Endothelial cell of umbilical vein (primary cell): ENCODE measurements at regions of chr1 and their contacts with region 1.

Region 1: GRCh38 chr1:208207388-208208131 is 36.6 kb downstream of the PLXNA2 start:
- DNase-seq: peak; percentile 97
- H3K4me3 ChIP-seq: no peak overlapping the region
- H3K27ac ChIP-seq: peak overlapping the region; percentile 94
- H3K4me1 ChIP-seq: peaks cover 94% of the 10 kb centered on the region
- H3K27me3 ChIP-seq: no peaks in the 10 kb centered on the region
- CTCF ChIP-seq: no peak
- POLR2A ChIP-seq: no peak

Region 2: GRCh38 chr1:207868774-207869721 is 338.5 kb before region 1 on chr1:
- CTCF ChIA-PET with region 1: no interaction called
- POLR2A ChIA-PET with region 1: no interaction called
- dilution Hi-C with region 1: no loop called
- intact Hi-C with region 1: no loop called
- DNase-seq: peak; percentile 83
- H3K4me3 ChIP-seq: peak overlapping the region; percentile 64 to 67 (median 65)
- H3K27ac ChIP-seq: peak overlapping the region; percentile 52
- H3K4me1 ChIP-seq: peaks cover 17% of the 10 kb centered on the region
- H3K27me3 ChIP-seq: no peaks in the 10 kb centered on the region
- CTCF ChIP-seq: peak; percentile 73 to 95
- POLR2A ChIP-seq: peak; percentile 59

Region 3: DNA sequence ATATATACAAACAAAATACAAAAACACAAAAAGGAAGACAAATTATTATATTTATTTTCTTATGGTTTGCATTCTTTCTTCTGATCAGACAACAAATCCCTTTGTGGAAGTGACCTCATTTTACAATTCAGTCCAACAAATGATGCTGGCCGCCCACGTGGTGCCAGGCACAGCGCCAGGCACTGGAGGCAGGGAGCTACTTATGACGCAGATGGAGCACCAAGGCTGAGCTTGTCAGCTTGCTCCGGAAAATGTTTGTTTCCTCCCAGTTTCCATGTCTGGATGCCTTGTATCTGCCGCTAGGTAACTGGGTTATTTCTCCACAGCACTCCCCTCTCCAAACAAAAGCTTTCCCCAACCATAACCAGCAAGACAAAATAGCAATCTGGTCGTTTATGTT is 265.9 kb before region 1 on chr1:
- CTCF ChIA-PET with region 1: interaction called, 3 read pairs
- POLR2A ChIA-PET with region 1: no interaction called
- dilution Hi-C with region 1: no loop called
- intact Hi-C with region 1: loop called (anchors 5 kb)
- DNase-seq: peak; percentile 97
- H3K4me3 ChIP-seq: peak overlapping the region in 1 of 3 experiments; percentile 8
- H3K27ac ChIP-seq: peak overlapping the region; percentile 92
- H3K4me1 ChIP-seq: peaks cover 52% of the 10 kb centered on the region
- H3K27me3 ChIP-seq: no peaks in the 10 kb centered on the region
- CTCF ChIP-seq: no peak
- POLR2A ChIP-seq: peak; percentile 49

Region 4: DNA sequence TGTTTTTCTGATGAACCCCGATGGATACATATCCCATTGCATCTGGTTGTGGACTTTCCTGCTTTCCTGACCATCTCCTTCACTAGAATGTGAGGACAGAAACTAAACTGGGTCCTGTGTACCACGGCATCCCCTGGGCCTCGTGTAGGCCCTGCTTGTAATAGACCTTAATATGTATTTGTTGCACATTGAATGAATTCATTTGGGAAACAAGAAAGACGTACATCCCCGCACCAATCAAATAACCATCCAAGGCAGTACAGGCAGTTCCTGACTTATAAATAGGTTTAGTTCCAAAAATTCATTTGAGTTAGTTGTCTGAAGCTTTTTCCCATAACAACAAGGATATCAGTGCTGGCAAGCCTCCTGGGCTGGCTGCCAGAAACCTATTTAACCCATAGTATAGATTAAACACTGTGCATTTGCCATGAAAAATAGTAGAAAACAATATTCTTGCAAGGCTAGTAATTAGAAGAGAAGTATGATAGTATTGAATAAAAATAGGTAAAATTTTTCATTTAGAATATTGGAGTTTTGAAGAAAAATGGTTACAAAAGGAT is 214.8 kb before region 1 on chr1:
- CTCF ChIA-PET with region 1: no interaction called
- POLR2A ChIA-PET with region 1: no interaction called
- dilution Hi-C with region 1: no loop called
- intact Hi-C with region 1: no loop called
- DNase-seq: peak; percentile 10
- H3K4me3 ChIP-seq: no peak overlapping the region
- H3K27ac ChIP-seq: no peak overlapping the region
- H3K4me1 ChIP-seq: no peaks in the 10 kb centered on the region
- H3K27me3 ChIP-seq: peaks cover 30 to 49% of the 10 kb centered on the region in 2 experiments
- CTCF ChIP-seq: no peak
- POLR2A ChIP-seq: no peak

Region 5: GRCh38 chr1:208132287-208132883 is 75.2 kb before region 1 on chr1:
- CTCF ChIA-PET with region 1: interaction called, 19 read pairs
- POLR2A ChIA-PET with region 1: no interaction called
- dilution Hi-C with region 1: no loop called
- intact Hi-C with region 1: no loop called
- DNase-seq: peak; percentile 64
- H3K4me3 ChIP-seq: no peak overlapping the region
- H3K27ac ChIP-seq: no peak overlapping the region
- H3K4me1 ChIP-seq: peaks cover 4% of the 10 kb centered on the region
- H3K27me3 ChIP-seq: no peaks in the 10 kb centered on the region
- CTCF ChIP-seq: peak; percentile 88 to 91
- POLR2A ChIP-seq: no peak

Region 6: DNA sequence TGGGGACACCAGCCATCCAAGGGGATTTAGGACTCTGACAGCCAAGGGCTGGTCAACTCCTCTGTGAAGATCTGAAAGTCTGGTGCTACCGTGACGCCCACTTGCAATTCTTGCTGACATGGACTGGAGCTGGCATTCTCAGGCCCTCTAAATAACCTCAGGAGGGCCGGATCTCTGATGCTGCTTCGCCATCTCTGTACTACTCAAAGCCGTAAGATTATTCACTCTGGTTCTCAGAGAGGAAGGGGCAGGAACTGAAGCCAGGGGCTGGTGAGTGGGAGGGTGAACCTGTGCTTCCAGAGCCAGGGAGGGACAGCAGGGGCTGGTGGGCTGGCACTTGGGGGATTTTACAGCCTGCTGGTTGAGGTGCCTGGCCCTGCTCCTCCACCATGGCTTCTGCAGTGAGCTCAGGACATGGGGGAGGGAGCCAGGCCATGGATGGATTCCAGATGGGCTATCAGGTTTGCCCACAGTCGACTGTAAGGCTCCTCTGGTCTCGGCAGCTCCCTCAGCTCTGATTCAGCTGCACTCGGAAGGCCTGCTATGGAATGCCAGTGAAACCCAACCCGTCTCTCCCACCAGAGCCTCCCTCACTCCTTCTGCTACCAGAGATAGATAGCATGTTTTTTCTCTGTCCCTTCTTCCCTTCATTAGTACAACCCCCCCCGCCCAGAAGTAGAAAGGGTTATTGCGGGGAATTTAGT is 47.9 kb before region 1 on chr1:
- CTCF ChIA-PET with region 1: interaction called, 3 read pairs
- POLR2A ChIA-PET with region 1: no interaction called
- dilution Hi-C with region 1: no loop called
- intact Hi-C with region 1: loop called (anchors 2 kb)
- DNase-seq: peak; percentile 41
- H3K4me3 ChIP-seq: no peak overlapping the region
- H3K27ac ChIP-seq: peak overlapping the region; percentile 27
- H3K4me1 ChIP-seq: peaks cover 54% of the 10 kb centered on the region
- H3K27me3 ChIP-seq: no peaks in the 10 kb centered on the region
- CTCF ChIP-seq: no peak
- POLR2A ChIP-seq: no peak

Region 7: DNA sequence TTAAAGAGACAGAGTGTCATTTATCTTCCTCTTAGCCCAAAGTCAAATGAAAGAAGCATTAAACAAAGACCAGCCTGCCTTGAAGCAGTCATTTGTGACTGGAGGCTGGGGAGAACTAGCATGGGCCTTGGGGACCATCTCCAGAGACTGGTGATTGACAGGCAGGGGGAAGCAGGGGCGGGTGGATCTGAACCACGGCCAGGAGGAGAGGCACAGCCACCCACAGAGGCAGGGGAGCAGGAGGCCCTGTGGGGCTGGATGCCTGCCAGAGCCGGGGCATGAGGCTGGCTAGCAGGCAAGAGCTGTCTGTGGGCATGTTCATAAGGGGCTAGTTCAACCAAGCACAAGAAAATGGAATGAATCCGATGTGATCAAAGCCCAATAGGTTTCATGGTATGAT is 37.3 kb before region 1 on chr1:
- CTCF ChIA-PET with region 1: interaction called, 4 read pairs
- POLR2A ChIA-PET with region 1: no interaction called
- dilution Hi-C with region 1: no loop called
- intact Hi-C with region 1: loop called (anchors 1 kb)
- DNase-seq: no peak
- H3K4me3 ChIP-seq: no peak overlapping the region
- H3K27ac ChIP-seq: no peak overlapping the region
- H3K4me1 ChIP-seq: peaks cover 17% of the 10 kb centered on the region
- H3K27me3 ChIP-seq: no peaks in the 10 kb centered on the region
- CTCF ChIP-seq: no peak
- POLR2A ChIP-seq: no peak

Region 8: DNA sequence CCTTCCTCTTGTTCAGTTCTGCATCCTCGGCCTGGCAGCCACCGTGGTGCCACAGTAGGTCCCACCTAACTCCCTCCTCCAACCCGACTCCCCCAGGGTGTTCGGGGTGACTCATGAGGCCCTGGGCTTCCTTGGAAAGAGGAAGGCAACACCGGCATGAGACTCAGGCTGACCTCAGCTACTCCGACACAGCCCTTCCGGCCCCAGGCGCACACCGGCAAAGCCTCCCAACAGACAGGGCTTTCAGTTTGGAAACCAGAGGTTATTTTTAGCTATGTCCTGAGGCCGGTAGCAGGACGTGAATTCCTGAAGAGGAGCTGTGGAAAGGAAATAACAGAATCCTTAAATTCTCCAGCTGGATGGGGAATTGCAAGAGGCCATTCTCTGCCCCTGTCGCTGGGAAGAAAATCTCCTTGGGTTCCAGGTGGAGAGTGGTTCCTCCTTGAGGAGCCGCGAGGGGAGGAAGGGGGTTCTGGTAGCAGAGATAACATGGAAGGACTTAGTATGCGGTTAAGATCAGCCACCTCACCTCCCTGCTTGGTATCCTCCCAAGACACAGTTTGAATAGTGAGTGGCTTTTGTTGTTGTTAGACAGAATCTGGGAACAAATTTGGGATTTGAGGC is 12.2 kb after region 1 on chr1:
- CTCF ChIA-PET with region 1: interaction called, 22 read pairs
- POLR2A ChIA-PET with region 1: interaction called, 22 read pairs
- dilution Hi-C with region 1: no loop called
- intact Hi-C with region 1: loop called (anchors 1 kb)
- DNase-seq: peak; percentile 82
- H3K4me3 ChIP-seq: no peak overlapping the region
- H3K27ac ChIP-seq: peak overlapping the region; percentile 91
- H3K4me1 ChIP-seq: peaks cover 90% of the 10 kb centered on the region
- H3K27me3 ChIP-seq: no peaks in the 10 kb centered on the region
- CTCF ChIP-seq: no peak
- POLR2A ChIP-seq: peak; percentile 33